Right lobe of liver (tissue), 6 donors: ENCODE measurements at regions of chr11 and their contacts with region 1.

Region 1: GRCh38 chr11:72722050-72722748 is 30.0 kb downstream of the ARAP1 start:
- DNase-seq: peak; percentile 88 to 92 (median 92)
- ATAC-seq: peak; percentile 76 to 84 (median 82)
- H3K4me3 ChIP-seq: peak overlapping the region; percentile 54 to 73 (median 61)
- H3K27ac ChIP-seq: peak overlapping the region; percentile 74 to 93 (median 90)
- H3K4me1 ChIP-seq: peaks cover 0 to 48% (median 23%) of the 10 kb centered on the region in 4 donors
- H3K27me3 ChIP-seq: no peaks in the 10 kb centered on the region
- CTCF ChIP-seq: no peak
- POLR2A ChIP-seq: peak; percentile 69

Region 2: DNA sequence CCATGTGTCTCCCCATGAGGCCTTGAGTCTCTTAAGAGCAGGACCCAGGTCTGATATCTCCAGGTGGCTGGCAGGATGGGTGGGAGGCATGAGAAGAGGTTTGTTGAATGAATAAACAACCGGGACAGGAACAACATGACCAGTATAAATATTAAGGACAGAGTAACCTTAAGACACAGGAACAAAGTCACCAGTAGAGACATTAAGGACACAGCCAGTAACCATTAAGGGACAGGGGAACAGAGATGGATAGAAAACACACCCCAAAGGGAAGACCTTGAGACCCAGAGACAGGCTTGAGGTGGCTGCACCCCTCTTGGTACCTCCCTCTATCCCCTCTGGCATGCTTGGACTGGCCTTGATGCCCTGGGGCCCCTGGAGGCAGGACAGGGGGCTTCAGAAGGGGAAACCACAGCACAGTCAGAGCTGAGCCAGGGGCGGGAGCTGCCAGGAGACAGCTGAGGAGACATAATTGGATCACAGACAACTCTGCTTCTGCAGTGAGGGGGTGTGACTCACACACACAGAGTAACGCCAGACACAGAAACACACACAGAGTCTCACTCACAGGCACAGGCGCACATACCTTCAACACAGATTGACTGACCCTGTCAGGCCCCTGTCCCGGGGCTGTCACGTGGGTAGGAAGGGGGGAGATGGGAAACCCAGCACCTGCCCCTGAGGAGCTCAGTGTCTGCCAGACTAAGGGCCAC is 50.9 kb after region 1 on chr11:
- intact Hi-C with region 1: loop called in 1 of 2 experiments (anchors 10 kb)
- DNase-seq: no peak
- ATAC-seq: peak in 1 of 4 donors; percentile 16
- H3K4me3 ChIP-seq: no peak overlapping the region
- H3K27ac ChIP-seq: peak overlapping the region in 1 of 3 donors; percentile 29
- H3K4me1 ChIP-seq: peaks cover 0 to 76% (median 31%) of the 10 kb centered on the region in 4 donors
- H3K27me3 ChIP-seq: no peaks in the 10 kb centered on the region
- CTCF ChIP-seq: no peak
- POLR2A ChIP-seq: no peak

Region 3: GRCh38 chr11:72787216-72788104 is 65.3 kb after region 1 on chr11:
- intact Hi-C with region 1: loop called (anchors 5 kb)
- DNase-seq: peak; percentile 90 to 95 (median 95)
- ATAC-seq: peak; percentile 86 to 92 (median 87)
- H3K4me3 ChIP-seq: peak overlapping the region in 2 of 3 donors; percentile 18 to 26
- H3K27ac ChIP-seq: peak overlapping the region; percentile 67 to 71 (median 68)
- H3K4me1 ChIP-seq: peaks cover 0 to 55% (median 24%) of the 10 kb centered on the region in 4 donors
- H3K27me3 ChIP-seq: no peaks in the 10 kb centered on the region
- CTCF ChIP-seq: peak; percentile 22 to 65 (median 34)
- POLR2A ChIP-seq: peak; percentile 62

Region 4: DNA sequence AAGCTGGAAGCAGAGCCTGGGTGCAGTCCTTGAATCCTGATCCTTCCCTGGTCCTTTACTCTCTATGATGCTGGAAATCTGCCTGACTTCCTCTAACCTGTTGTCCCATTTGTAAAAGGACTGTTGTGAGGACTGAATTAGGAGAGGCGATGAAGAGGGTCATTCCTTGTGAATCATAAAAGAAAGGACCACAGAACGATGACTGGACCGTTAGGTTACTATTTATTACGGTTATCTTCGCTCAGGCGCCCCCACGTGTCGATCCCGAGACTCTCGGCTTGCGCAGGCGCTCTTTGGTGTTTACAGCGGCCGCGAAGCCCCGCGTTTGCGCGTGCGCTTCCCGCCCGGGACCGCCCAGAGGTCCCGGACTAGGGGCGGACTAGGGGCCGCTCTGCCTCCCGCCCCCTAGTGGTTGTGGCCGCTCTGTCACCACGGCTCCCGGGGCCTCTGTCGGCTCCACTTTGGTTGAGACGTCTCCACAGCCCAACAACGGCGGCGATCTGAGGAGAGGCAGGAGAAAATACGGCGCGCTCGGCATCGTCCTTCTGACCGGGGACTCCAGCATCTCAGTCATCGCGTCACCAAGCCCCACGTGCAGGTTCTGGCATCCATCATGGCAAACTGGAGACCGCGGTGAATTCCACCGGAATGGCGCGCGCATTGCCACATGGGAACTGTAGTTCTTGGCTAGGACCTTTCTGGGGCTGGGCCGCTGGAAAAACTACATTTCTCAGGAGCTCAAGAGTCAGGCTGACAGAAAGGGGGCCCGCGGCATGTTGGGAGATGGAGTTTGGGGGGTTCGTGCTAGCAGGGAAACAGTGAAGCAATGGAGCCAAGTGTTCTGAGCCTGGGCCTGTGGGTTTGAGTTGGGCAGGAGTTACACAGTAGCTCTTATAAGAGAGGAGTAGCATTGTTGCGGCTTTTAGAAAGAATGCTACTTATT is 71.5 kb after region 1 on chr11 and contains the start of gene STARD10:
- intact Hi-C with region 1: loop called (anchors 5 kb)
- DNase-seq: peak; percentile 97
- ATAC-seq: peak; percentile 91 to 96 (median 93)
- H3K4me3 ChIP-seq: peak within 1 kb of the TSS; percentile 57 to 74 (median 70)
- H3K27ac ChIP-seq: peak within 1 kb of the TSS; percentile 55 to 84 (median 80)
- H3K4me1 ChIP-seq: peaks cover 0 to 44% (median 11%) of the 10 kb centered on the region in 4 donors
- H3K27me3 ChIP-seq: no peaks in the 10 kb centered on the region
- CTCF ChIP-seq: peak; percentile 98 to 100 (median 99)
- POLR2A ChIP-seq: no peak
- total RNA-seq, gene STARD10: 282 to 525 (median 330) TPM

Region 5: GRCh38 chr11:72875736-72876135 is 153.5 kb after region 1 on chr11:
- intact Hi-C with region 1: no loop called
- DNase-seq: no peak
- ATAC-seq: no peak
- H3K4me3 ChIP-seq: no peak overlapping the region
- H3K27ac ChIP-seq: no peak overlapping the region
- H3K4me1 ChIP-seq: no peaks in the 10 kb centered on the region
- H3K27me3 ChIP-seq: no peaks in the 10 kb centered on the region
- CTCF ChIP-seq: no peak
- POLR2A ChIP-seq: no peak